Cardiac septum (tissue), 1 donor: ENCODE measurements at regions of chr1 and their contacts with region 1.

Region 1: GRCh38 chr1:201447911-201448871 is 20.8 kb downstream of the PHLDA3 start:
- DNase-seq: peak; percentile 85

Region 2: GRCh38 chr1:201468844-201469511 is 20.8 kb after region 1 on chr1 and contains the start of gene PHLDA3:
- intact Hi-C with region 1: loop called (anchors 2 kb)
- DNase-seq: peak; percentile 90
- total RNA-seq, gene PHLDA3: 44.6 TPM

Region 3: GRCh38 chr1:201481761-201482493 is 33.7 kb after region 1 on chr1:
- intact Hi-C with region 1: loop called (anchors 1 kb)
- DNase-seq: peak; percentile 93

Region 4: GRCh38 chr1:201511941-201512539 is 63.8 kb after region 1 on chr1:
- intact Hi-C with region 1: loop called (anchors 2 kb)
- DNase-seq: no peak